GM10248 (cell line): ENCODE measurements at regions of chr13 and their contacts with region 1.

Region 1: DNA sequence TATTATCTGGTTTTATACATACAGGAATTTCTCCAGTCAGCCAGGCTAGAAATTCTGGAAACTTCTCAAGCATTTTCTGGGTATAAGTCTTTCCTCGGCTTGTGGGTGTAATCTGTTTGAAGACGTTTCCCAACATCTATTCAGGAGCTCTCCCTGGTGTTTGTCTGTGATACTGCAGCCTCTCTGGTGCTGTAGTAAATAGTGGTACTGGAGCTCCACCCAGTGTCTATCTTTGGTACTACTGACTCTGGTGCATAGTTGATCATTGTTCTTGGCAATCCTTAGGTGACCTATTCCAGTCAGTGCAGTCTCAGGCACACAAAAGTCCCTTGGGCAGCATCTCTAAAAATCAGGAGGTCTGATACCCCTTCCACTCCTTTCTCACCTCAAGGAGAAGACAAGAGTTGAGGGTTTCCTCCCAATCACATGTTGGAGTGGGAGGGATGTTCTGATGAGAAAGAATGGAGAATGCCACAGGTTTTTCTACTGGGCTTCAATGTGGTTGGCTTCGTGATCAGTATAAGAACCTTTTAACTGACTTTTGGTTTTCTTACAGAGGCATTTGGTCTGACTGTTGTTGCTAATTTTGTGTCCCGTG is 115.5 kb downstream of the CYSLTR2 start:
- DNase-seq: peak; percentile 62
- CTCF ChIP-seq: peak; percentile 96

Region 2: DNA sequence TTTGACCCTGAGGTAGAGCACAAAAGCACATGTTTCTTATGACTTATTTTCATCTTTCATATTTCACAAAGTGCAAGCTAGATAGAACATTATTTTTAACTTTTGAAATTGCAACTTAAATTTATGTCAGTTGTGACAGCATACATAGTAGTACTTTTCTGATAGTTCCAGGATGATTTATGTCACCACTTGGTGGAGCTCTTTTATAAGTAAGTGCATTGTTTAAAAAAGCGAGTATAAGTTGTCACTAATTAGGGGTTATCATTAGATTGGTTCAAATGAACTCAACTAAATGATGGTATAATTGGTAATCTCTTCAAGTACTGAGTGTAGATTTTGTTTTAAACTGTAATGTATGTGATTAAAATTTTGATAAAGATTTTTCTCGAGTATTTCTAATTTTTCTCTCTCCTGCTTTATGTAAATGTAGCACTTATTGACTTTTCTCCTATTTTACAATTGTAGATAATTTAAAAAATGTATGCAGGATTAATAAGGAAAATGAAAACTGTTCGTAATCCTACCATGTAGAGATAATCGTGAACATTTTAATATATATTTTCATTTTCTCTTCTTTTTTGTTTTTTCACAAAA is 434.6 kb before region 1 on chr13:
- CTCF ChIA-PET with region 1: interaction called, 36 read pairs
- POLR2A ChIA-PET with region 1: no interaction called
- DNase-seq: peak; percentile 29
- CTCF ChIP-seq: peak; percentile 50

Region 3: GRCh38 chr13:48595431-48596429 is 173.5 kb before region 1 on chr13:
- CTCF ChIA-PET with region 1: interaction called, 30 read pairs
- POLR2A ChIA-PET with region 1: no interaction called
- DNase-seq: peak; percentile 48
- CTCF ChIP-seq: peak; percentile 48

Region 4: GRCh38 chr13:48725271-48725670 is 43.9 kb before region 1 on chr13:
- CTCF ChIA-PET with region 1: no interaction called
- POLR2A ChIA-PET with region 1: no interaction called
- DNase-seq: no peak
- CTCF ChIP-seq: no peak

Region 5: GRCh38 chr13:48749699-48750473 is 19.3 kb before region 1 on chr13:
- CTCF ChIA-PET with region 1: interaction called, 43 read pairs
- POLR2A ChIA-PET with region 1: no interaction called
- DNase-seq: peak; percentile 73
- CTCF ChIP-seq: peak; percentile 50

Region 6: DNA sequence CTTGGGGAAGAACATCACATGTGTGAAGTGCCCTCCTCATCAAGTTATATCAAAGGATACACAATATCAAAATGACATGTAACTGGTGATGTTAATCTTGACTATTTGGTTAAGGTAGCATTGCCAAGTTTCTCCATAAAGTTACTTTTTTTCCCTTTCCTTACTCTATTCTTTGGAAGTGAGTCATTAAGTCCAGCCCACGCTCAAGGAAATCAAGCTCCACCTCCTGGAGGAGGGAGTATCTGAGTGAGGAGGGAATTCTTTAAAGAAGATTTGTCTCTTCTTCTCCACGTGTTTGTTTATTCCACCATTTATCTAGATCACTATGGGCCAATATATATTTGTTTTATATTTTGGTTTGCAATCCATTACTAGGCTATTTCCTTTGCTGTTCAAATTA is 172.9 kb after region 1 on chr13:
- CTCF ChIA-PET with region 1: no interaction called
- POLR2A ChIA-PET with region 1: no interaction called
- DNase-seq: no peak
- CTCF ChIP-seq: no peak